H1 (cell line): ENCODE measurements at regions of chr7 and their contacts with region 1.

Region 1: DNA sequence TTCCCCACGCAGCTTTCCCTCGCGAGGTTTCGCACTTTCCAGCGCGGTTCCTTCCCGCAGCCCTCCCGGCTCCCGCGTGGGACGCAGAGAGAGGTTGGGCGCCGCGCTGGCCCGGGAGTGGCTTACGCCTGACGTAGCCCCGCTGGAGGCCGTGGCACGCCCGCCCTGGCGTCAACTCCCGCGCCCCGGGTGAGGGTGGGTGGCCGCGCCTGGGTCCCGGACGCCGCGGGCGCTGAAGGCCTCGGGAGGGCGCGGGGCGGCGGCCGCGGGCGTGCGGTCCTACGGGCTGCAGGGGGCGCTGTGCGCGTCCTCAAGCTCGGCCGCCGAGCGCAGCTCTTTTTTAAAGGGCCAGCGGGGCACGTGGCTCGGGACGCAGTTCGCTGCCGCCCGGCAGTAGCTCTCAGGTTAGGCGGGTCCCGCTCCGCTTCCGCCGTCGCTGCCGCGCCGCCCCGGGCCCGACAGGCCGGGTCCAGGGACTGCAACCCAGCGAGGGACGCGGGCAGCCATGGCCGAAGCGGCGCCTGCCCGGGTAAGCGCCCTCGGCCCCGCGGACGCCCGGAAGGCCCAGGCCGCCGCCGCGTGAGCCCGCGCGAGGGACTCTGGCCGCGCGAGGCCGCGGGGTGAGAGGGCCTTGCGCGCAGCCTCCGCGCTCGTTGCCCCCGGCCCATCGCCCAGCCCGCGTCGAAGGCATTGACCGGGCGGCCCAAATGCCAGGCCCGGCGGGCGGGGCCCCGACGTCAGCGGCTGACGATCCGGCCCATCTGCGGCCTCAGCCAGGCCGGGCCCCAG is at the start of gene ZNF783:
- DNase-seq: peak; percentile 50 to 88
- H3K4me3 ChIP-seq: peak within 1 kb of the TSS; percentile 47 to 73 (median 50)
- H3K27ac ChIP-seq: peak within 1 kb of the TSS; percentile 81; the same call in 1 of the 2 replicates
- H3K4me1 ChIP-seq: peaks cover 0 to 3% (median 0%) of the 10 kb centered on the region in 4 experiments; a peak in 1 of 7 replicates
- H3K27me3 ChIP-seq: peaks cover 0 to 2% (median 1%) of the 10 kb centered on the region in 4 experiments; a peak in 1 of 7 replicates
- CTCF ChIP-seq: peak; percentile 72 to 94 (median 73)
- EP300 ChIP-seq: no peak
- POLR2A ChIP-seq: peak; percentile 46 to 75
- RAD21 ChIP-seq: peak; percentile 50 to 73
- total RNA-seq, gene ZNF783: 7.3 and 8.3 TPM in 2 replicates

Region 2: GRCh38 chr7:149133028-149133705 is 128.9 kb before region 1 on chr7:
- CTCF ChIA-PET with region 1: no interaction called
- POLR2A ChIA-PET with region 1: no interaction called
- DNase-seq: no peak
- H3K4me3 ChIP-seq: no peak overlapping the region
- H3K27ac ChIP-seq: no peak overlapping the region
- H3K4me1 ChIP-seq: peaks cover 0 to 6% (median 0%) of the 10 kb centered on the region in 4 experiments; a peak in 2 of 7 replicates
- H3K27me3 ChIP-seq: no peaks in the 10 kb centered on the region
- CTCF ChIP-seq: no peak
- EP300 ChIP-seq: no peak
- POLR2A ChIP-seq: no peak
- RAD21 ChIP-seq: no peak

Region 3: GRCh38 chr7:149171892-149172533 is 90.0 kb before region 1 on chr7:
- CTCF ChIA-PET with region 1: no interaction called
- POLR2A ChIA-PET with region 1: no interaction called
- DNase-seq: no peak
- H3K4me3 ChIP-seq: no peak overlapping the region
- H3K27ac ChIP-seq: no peak overlapping the region
- H3K4me1 ChIP-seq: no peaks in the 10 kb centered on the region
- H3K27me3 ChIP-seq: no peaks in the 10 kb centered on the region
- CTCF ChIP-seq: no peak
- EP300 ChIP-seq: no peak
- POLR2A ChIP-seq: no peak
- RAD21 ChIP-seq: no peak

Region 4: DNA sequence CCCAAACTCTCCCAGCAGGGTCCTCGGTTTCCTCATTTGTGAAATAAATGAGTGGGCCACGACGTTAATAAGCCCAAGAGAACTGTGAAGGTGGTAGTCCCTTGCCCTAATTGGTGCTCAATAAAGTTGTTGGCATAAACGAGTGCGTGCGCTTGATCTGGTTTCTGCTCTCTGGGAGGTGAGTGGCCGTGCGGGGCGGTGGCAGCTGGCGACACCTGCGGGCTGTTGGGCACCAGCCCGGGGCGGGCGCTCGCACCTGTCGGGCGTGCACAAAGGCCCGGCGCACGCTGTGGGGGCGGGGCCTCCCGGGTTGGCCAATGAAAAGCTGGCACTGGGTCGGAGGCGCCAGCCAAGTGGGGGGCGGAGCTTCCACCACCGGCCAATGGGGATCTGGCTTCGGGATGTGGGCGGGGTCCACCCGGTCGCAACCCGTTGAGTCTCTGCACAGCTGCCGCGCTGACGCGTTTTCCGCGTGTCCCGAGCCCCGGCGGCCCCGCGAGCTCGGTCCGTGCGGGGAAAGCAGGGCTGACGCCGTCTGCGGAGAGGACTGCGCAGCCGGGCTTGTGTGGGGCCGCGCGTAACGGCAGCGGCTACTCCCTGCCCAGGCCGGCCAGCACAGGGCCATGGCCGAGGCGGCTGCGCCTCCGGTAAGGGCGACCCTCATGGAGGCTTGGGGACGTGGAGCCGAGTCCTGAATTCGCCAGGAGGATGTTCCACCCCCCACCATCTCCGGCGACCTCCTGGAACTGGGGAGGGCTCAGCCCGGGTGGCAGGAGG is 23.0 kb after region 1 on chr7:
- CTCF ChIA-PET with region 1: interaction called, 21 read pairs
- POLR2A ChIA-PET with region 1: interaction called, 12 read pairs
- DNase-seq: peak; percentile 73 to 100
- H3K4me3 ChIP-seq: peak overlapping the region; percentile 73 to 79 (median 74)
- H3K27ac ChIP-seq: no peak overlapping the region
- H3K4me1 ChIP-seq: peaks cover 0 to 6% (median 4%) of the 10 kb centered on the region in 4 experiments; a peak in 5 of 7 replicates
- H3K27me3 ChIP-seq: peaks cover 0 to 8% (median 4%) of the 10 kb centered on the region in 4 experiments; a peak in 3 of 7 replicates
- CTCF ChIP-seq: peak; percentile 15 to 37 (median 36); a peak in 2 of 4 replicates
- EP300 ChIP-seq: no peak
- POLR2A ChIP-seq: peak in 1 of 2 experiments; percentile 61; a peak in 1 of 3 replicates
- RAD21 ChIP-seq: peak; percentile 23 to 44; a peak in 3 of 4 replicates

Region 5: DNA sequence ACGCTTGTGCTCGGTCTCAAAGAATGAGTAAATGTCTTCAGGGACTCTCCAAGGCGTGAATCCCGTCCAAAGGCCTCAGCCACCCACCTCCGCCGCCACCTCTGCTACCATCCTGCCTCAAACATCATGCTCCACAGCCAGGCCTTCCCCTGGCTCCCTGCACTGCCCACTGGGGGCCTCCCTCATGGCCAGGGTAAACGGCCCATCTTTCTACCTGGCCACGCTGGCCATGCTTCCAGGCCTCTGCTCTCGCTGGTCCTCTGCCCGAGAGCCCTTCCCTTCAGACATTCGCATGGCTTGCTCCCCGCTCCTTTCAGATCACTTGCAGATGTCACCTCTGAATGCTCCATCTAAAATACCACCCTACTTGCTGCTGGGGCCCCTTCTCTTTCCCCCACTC is 40.2 kb after region 1 on chr7:
- CTCF ChIA-PET with region 1: no interaction called
- POLR2A ChIA-PET with region 1: no interaction called
- DNase-seq: no peak
- H3K4me3 ChIP-seq: no peak overlapping the region
- H3K27ac ChIP-seq: no peak overlapping the region
- H3K4me1 ChIP-seq: 0 out of 7 replicates have a peak, but pooled peaks cover 0 to 4% (median 0%) of the 10 kb centered on the region in 4 experiments
- H3K27me3 ChIP-seq: no peaks in the 10 kb centered on the region
- CTCF ChIP-seq: no peak
- EP300 ChIP-seq: no peak
- POLR2A ChIP-seq: no peak
- RAD21 ChIP-seq: no peak